ENCODE measurements at regions of chr22 and their contacts with region 1.

Region 1: GRCh38 chr22:32850591-32851517 is 49.3 kb downstream of the TIMP3 start:
- DNase-seq: no peak
- H3K4me3 ChIP-seq: no peak overlapping the region
- H3K27ac ChIP-seq: peak overlapping the region; percentile 72 to 73
- H3K4me1 ChIP-seq: peaks cover 17% of the 10 kb centered on the region
- H3K27me3 ChIP-seq: no peaks in the 10 kb centered on the region
- CTCF ChIP-seq: no peak
- POLR2A ChIP-seq: no peak

Region 2: DNA sequence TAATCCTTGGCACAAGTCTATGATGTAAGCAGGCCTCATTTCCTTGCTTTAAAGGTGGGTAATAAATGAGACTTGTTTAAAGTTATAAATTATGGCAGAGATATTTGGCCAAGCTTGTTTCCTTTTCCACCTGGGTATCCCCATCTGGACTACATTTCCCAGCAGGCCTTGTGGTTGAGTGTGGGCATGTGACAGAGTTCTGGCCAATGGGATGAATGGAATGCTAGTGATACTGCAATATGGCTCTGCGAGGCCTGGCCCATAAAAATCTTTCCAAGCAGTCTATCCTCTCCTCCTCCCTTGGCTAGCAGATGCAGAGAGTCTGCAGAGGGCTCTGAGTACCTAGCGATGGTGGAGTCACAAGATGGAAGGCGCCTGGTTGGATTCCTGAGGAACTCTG is 53.2 kb after region 1 on chr22:
- intact Hi-C with region 1: loop called (anchors 5 kb)
- DNase-seq: no peak
- H3K4me3 ChIP-seq: no peak overlapping the region
- H3K27ac ChIP-seq: no peak overlapping the region
- H3K4me1 ChIP-seq: no peaks in the 10 kb centered on the region
- H3K27me3 ChIP-seq: no peaks in the 10 kb centered on the region
- CTCF ChIP-seq: no peak
- POLR2A ChIP-seq: no peak